ENCODE measurements at regions of chr22 and their contacts with region 1.

Region 1: GRCh38 chr22:21045585-21046294 is at the start of gene LRRC74B:
- DNase-seq: peak; percentile 87
- ATAC-seq: peak; percentile 98
- H3K4me3 ChIP-seq: peak within 1 kb of the TSS; percentile 37
- H3K27ac ChIP-seq: peak within 1 kb of the TSS; percentile 56
- H3K4me1 ChIP-seq: peaks cover 15% of the 10 kb centered on the region
- H3K27me3 ChIP-seq: no peaks in the 10 kb centered on the region
- CTCF ChIP-seq: no peak
- POLR2A ChIP-seq: no peak
- RAD21 ChIP-seq: no peak
- total RNA-seq, gene LRRC74B: not detected in 2 replicates

Region 2: DNA sequence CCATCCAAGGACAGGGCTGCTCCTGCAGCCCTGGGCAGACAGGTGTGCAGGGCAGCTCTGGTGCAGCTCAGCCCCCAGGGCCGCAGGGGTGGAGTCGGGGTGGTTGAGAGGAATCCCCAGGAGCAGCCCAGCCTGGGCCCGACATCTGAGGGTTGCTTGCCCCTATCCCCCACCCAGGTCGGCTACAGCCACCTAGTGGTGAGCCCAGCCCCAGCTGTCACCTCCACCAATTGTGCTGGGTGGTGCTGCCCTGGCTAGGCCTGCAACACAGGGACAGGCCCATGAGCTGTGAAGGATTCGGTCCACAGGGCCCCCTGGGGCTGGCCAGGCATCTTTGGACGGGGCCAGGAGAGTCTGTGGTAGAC is 807.2 kb before region 1 on chr22:
- CTCF ChIA-PET with region 1: no interaction called
- POLR2A ChIA-PET with region 1: no interaction called
- dilution Hi-C with region 1: no loop called
- in situ Hi-C with region 1: no loop called
- intact Hi-C with region 1: no loop called
- DNase-seq: no peak
- ATAC-seq: peak; percentile 27; the same call in 1 of the 2 replicates
- H3K4me3 ChIP-seq: no peak overlapping the region
- H3K27ac ChIP-seq: no peak overlapping the region
- H3K4me1 ChIP-seq: peaks cover 3% of the 10 kb centered on the region
- H3K27me3 ChIP-seq: peaks cover 20% of the 10 kb centered on the region; the same call in 1 of the 2 replicates
- CTCF ChIP-seq: peak; percentile 25; the same call in 1 of the 2 replicates
- POLR2A ChIP-seq: no peak
- RAD21 ChIP-seq: no peak

Region 3: GRCh38 chr22:20803696-20804324 is 241.9 kb before region 1 on chr22:
- CTCF ChIA-PET with region 1: no interaction called
- POLR2A ChIA-PET with region 1: no interaction called
- dilution Hi-C with region 1: no loop called
- in situ Hi-C with region 1: no loop called
- intact Hi-C with region 1: no loop called
- DNase-seq: peak; percentile 44
- ATAC-seq: peak; percentile 54
- H3K4me3 ChIP-seq: no peak overlapping the region
- H3K27ac ChIP-seq: no peak overlapping the region
- H3K4me1 ChIP-seq: peaks cover 7% of the 10 kb centered on the region
- H3K27me3 ChIP-seq: no peaks in the 10 kb centered on the region
- CTCF ChIP-seq: peak; percentile 60
- POLR2A ChIP-seq: no peak
- RAD21 ChIP-seq: peak; percentile 71

Region 4: GRCh38 chr22:21001560-21002325 is 44.0 kb before region 1 on chr22 and contains the start of gene THAP7:
- CTCF ChIA-PET with region 1: no interaction called
- POLR2A ChIA-PET with region 1: no interaction called
- dilution Hi-C with region 1: no loop called
- in situ Hi-C with region 1: no loop called
- intact Hi-C with region 1: loop called (anchors 1 kb)
- DNase-seq: peak; percentile 93
- ATAC-seq: peak; percentile 91
- H3K4me3 ChIP-seq: peak within 1 kb of the TSS; percentile 75
- H3K27ac ChIP-seq: peak within 1 kb of the TSS; percentile 93
- H3K4me1 ChIP-seq: peaks cover 15% of the 10 kb centered on the region
- H3K27me3 ChIP-seq: no peaks in the 10 kb centered on the region
- CTCF ChIP-seq: no peak
- POLR2A ChIP-seq: peak; percentile 88
- RAD21 ChIP-seq: no peak
- total RNA-seq, gene THAP7: 13.3 and 14.2 TPM in 2 replicates

Region 5: DNA sequence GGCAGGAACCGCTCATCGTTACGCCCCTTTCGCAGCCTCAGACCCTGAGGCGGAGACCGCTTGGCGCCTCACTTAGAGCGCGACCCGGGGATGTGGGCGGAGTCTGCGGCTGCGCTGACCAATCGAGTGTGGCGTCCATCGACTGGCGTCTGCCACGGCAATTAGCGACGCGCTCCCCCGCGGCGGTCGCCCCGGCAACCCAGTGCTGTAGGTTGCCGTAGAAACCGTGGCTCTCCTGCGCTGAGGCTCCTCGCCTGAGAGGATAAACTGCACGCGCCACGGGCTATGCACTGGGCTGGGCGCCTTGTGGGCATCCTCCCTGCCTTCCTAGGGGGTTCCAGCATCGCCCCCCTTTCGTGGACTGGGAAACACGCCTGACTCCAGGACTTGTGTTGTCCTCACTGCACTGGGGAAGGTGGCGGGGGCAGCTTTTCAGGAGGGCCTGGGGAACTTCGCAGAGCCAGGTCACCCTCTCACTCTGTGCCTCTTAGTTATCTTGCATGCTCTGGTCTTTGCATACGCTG is 31.5 kb before region 1 on chr22:
- CTCF ChIA-PET with region 1: no interaction called
- POLR2A ChIA-PET with region 1: no interaction called
- dilution Hi-C with region 1: no loop called
- in situ Hi-C with region 1: no loop called
- intact Hi-C with region 1: loop called (anchors 2 kb)
- DNase-seq: peak; percentile 88
- ATAC-seq: peak; percentile 95
- H3K4me3 ChIP-seq: peak overlapping the region; percentile 52
- H3K27ac ChIP-seq: peak overlapping the region; percentile 88
- H3K4me1 ChIP-seq: peaks cover 14% of the 10 kb centered on the region
- H3K27me3 ChIP-seq: no peaks in the 10 kb centered on the region
- CTCF ChIP-seq: no peak
- POLR2A ChIP-seq: no peak
- RAD21 ChIP-seq: no peak

Measured in IMR-90 (cell line).